ENCODE measurements at regions of chr2 and their contacts with region 1.

Region 1: DNA sequence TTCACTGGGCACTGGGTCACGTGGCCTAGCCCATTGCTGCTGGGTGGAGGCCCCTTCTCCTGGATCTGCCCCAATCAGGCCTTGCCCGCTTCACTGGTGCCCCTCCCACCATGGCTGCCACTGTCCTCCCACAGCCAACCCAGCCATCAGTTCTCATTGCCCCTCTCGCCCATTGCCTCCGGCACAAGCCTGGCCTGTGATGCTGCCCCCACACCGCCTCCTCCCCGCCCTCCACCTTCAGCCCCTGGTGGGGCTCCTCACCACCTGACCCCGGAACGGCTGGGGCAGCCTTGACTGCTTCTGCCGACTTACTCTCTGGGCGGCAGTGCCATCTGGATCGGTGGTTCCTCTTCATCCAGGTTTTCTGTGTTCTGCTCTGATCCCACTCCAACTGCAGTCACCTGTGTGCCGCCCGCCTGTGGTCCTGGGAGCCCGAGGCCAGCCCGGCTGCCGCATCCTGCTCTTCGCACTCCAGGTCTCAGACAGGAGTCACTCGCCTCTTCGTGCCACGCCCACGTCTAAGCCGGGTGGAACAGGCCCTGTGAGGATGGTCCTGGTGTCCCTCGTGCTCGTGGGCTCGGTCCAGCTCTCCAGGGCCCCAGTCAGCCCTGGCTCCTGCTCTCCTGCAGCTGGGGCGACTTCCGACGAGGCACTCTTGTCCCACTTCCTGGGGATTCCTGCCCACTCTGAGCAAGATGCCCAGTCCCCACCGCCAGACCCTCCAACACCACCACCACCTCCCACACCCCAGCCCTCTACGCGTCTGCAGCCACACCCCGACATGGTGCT is 14.2 kb downstream of the D2HGDH start:
- DNase-seq: no peak

Region 2: GRCh38 chr2:240554767-240555493 is 1193.7 kb before region 1 on chr2:
- intact Hi-C with region 1: loop called in 1 of 2 experiments (anchors 5 kb)
- DNase-seq: peak; percentile 62

Region 3: GRCh38 chr2:241788572-241788971 is 39.9 kb after region 1 on chr2:
- intact Hi-C with region 1: no loop called
- DNase-seq: no peak